B cell (primary cell): ENCODE measurements at regions of chr11 and their contacts with region 1.

Region 1: DNA sequence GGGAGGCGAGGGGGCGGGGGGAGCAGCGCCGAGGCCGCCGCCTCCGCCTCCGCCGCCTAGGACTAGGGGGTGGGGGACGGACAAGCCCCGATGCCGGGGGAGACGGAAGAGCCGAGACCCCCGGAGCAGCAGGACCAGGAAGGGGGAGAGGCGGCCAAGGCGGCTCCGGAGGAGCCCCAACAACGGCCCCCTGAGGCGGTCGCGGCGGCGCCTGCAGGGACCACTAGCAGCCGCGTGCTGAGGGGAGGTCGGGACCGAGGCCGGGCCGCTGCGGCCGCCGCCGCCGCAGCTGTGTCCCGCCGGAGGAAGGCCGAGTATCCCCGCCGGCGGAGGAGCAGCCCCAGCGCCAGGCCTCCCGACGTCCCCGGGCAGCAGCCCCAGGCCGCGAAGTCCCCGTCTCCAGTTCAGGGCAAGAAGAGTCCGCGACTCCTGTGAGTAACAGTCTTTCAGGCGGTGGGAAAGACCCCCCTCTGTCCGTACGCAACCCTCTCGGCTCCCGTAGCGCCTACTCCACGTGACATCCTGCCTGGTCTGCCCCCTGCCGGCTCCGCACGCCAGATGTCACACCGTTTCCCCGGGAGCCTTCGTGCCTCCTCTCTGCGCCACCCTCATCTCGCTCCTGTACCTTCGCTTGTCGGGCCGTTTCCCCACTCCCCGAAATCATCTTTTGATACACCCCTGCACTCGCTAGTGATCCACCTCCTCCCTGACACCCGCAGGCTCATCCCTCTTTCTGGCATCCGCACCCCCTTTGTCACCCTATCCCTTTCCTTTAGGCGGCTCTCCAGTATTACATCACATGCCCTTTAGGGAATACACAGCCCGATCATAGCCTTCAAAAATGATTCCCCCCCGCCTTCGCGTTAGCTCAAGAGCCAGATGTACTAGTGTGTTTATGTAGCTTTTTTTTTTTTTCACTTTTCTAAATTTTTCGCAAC is 598 bp downstream of the ZFP91 start:
- DNase-seq: peak; percentile 96
- ATAC-seq: peak; percentile 37
- H3K4me3 ChIP-seq: peak overlapping the region; percentile 71 to 100 (median 99)
- H3K4me3 Mint-ChIP-seq: peak overlapping the region; percentile 97
- H3K27ac ChIP-seq: peak overlapping the region; percentile 89 to 100
- H3K27ac Mint-ChIP-seq: peak overlapping the region; percentile 100
- H3K4me1 ChIP-seq: peaks cover 48 to 52% of the 10 kb centered on the region in 2 donors
- H3K4me1 Mint-ChIP-seq: peaks cover 64% of the 10 kb centered on the region
- H3K27me3 ChIP-seq: no peaks in the 10 kb centered on the region
- H3K27me3 Mint-ChIP-seq: no peaks in the 10 kb centered on the region
- CTCF ChIP-seq: peak; percentile 79

Region 2: GRCh38 chr11:57657194-57658022 is 922.1 kb before region 1 on chr11 and contains the start of gene CLP1:
- CTCF ChIA-PET with region 1: no interaction called
- POLR2A ChIA-PET with region 1: no interaction called
- intact Hi-C with region 1: loop called (anchors 2 kb)
- DNase-seq: peak; percentile 98
- ATAC-seq: peak; percentile 97
- H3K4me3 ChIP-seq: peak within 1 kb of the TSS; percentile 68 to 95 (median 92)
- H3K4me3 Mint-ChIP-seq: peak within 1 kb of the TSS; percentile 94
- H3K27ac ChIP-seq: peak within 1 kb of the TSS; percentile 77 to 92
- H3K27ac Mint-ChIP-seq: peak within 1 kb of the TSS; percentile 94
- H3K4me1 ChIP-seq: peaks cover 8 to 14% of the 10 kb centered on the region in 2 donors
- H3K4me1 Mint-ChIP-seq: peaks cover 28% of the 10 kb centered on the region
- H3K27me3 ChIP-seq: no peaks in the 10 kb centered on the region
- H3K27me3 Mint-ChIP-seq: no peaks in the 10 kb centered on the region
- CTCF ChIP-seq: no peak
- total RNA-seq, gene CLP1: 15.5 and 15.8 TPM in 2 replicates

Region 3: DNA sequence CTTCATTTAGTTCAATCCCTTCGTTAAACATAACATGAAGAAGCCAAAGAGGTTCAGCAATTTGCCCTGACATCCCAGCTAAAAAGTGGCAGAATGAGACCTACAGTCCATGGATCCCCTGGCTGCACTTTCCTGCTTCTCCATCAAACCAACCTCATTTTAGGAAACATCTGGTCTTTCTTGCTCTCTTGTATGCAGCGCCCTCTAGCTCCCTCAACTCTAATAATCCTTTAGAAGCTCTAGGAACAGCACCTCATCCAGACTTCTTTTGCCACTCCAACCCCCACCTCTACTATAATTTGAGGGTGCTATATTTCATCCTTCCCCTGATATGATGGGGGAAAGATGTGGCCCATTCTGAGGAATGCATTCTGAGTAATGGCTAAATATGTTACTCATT is 50.4 kb after region 1 on chr11:
- CTCF ChIA-PET with region 1: interaction called, 30 read pairs
- POLR2A ChIA-PET with region 1: no interaction called
- intact Hi-C with region 1: no loop called
- DNase-seq: peak; percentile 50
- ATAC-seq: no peak
- H3K4me3 ChIP-seq: no peak overlapping the region
- H3K4me3 Mint-ChIP-seq: no peak overlapping the region
- H3K27ac ChIP-seq: no peak overlapping the region
- H3K27ac Mint-ChIP-seq: peak overlapping the region; percentile 8
- H3K4me1 ChIP-seq: peaks cover 3 to 5% of the 10 kb centered on the region in 2 donors
- H3K4me1 Mint-ChIP-seq: peaks cover 21% of the 10 kb centered on the region
- H3K27me3 ChIP-seq: no peaks in the 10 kb centered on the region
- H3K27me3 Mint-ChIP-seq: no peaks in the 10 kb centered on the region
- CTCF ChIP-seq: peak; percentile 47

Region 4: DNA sequence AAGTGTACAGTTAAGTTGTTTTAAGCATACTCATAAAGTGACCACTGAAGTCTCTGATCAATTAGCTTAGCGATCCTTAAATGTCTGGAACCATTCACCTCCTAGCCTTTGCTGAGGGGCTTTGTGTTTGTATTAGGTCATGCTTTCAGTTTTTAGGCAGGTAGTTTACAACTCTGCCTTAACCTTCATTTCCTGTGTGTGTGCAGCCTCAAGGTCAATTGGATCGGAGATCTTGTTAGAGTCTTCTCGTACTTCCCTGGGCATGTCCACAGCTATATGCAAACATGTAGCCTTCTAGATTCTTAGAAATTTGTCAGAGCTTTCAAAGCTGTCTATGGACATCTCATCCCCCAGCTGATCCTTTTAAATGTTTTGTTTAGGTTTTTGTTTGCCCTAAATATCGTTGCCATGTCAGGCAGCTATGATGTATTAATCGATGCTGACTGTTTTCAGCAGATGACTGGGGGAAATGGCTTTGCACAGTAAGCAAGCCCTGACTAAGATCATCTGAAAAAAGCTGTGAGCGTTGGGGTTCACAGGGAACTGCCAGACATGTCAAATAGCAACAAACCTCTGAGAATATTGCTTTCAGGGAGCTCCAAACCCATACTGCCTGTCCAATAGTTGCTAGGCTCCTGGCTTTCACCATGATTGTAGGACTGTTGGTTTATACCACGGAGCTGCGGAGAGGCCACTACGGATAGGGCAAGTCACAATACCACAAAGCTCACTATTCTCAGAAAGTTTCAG is 106.7 kb after region 1 on chr11:
- CTCF ChIA-PET with region 1: no interaction called
- POLR2A ChIA-PET with region 1: no interaction called
- intact Hi-C with region 1: no loop called
- DNase-seq: no peak
- ATAC-seq: no peak
- H3K4me3 ChIP-seq: no peak overlapping the region
- H3K4me3 Mint-ChIP-seq: no peak overlapping the region
- H3K27ac ChIP-seq: no peak overlapping the region
- H3K27ac Mint-ChIP-seq: no peak overlapping the region
- H3K4me1 ChIP-seq: no peaks in the 10 kb centered on the region
- H3K4me1 Mint-ChIP-seq: no peaks in the 10 kb centered on the region
- H3K27me3 ChIP-seq: peaks cover 0 to 6% (median 0%) of the 10 kb centered on the region in 4 experiments
- H3K27me3 Mint-ChIP-seq: peaks cover 10% of the 10 kb centered on the region
- CTCF ChIP-seq: no peak

Region 5: GRCh38 chr11:59142530-59143507 is 563.4 kb after region 1 on chr11 and contains the start of gene FAM111A:
- CTCF ChIA-PET with region 1: interaction called, 3 read pairs
- POLR2A ChIA-PET with region 1: interaction called, 7 read pairs
- intact Hi-C with region 1: loop called (anchors 2 kb)
- DNase-seq: peak; percentile 91
- ATAC-seq: peak; percentile 74
- H3K4me3 ChIP-seq: peak within 1 kb of the TSS; percentile 82 to 94 (median 89)
- H3K4me3 Mint-ChIP-seq: peak within 1 kb of the TSS; percentile 97
- H3K27ac ChIP-seq: peak within 1 kb of the TSS; percentile 88 to 90
- H3K27ac Mint-ChIP-seq: peak within 1 kb of the TSS; percentile 87
- H3K4me1 ChIP-seq: peaks cover 40 to 45% of the 10 kb centered on the region in 2 donors
- H3K4me1 Mint-ChIP-seq: peaks cover 68% of the 10 kb centered on the region
- H3K27me3 ChIP-seq: no peaks in the 10 kb centered on the region
- H3K27me3 Mint-ChIP-seq: no peaks in the 10 kb centered on the region
- CTCF ChIP-seq: no peak
- total RNA-seq, gene FAM111A: 120 and 126 TPM in 2 replicates

Region 6: DNA sequence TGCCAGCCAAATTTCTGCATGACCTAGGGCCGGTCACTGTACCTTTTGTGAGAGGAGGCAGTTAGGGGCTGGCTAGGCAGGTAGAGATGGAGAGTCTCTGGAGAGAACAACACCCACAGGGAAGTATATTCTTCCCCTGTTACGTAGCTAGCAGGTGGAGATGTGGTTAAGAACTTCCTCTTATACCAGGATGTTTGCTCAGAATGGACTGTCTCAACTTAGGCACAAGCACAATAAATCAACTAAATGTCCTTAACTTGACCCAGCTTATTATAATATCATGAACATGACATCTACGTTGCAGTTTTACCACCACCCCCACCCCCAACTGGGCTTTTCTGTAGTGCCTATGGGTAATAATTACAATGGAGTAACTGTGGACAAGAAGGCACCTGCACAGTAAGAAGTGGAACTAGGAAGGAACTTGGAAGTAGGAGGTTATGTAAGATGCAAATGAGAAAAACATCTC is 693.9 kb after region 1 on chr11:
- CTCF ChIA-PET with region 1: no interaction called
- POLR2A ChIA-PET with region 1: no interaction called
- intact Hi-C with region 1: loop called (anchors 1 kb)
- DNase-seq: peak; percentile 88
- ATAC-seq: peak; percentile 85
- H3K4me3 ChIP-seq: peak overlapping the region in 1 of 5 experiments; percentile 44
- H3K4me3 Mint-ChIP-seq: peak overlapping the region; percentile 83
- H3K27ac ChIP-seq: peak overlapping the region; percentile 90 to 94
- H3K27ac Mint-ChIP-seq: peak overlapping the region; percentile 95
- H3K4me1 ChIP-seq: peaks cover 76 to 85% of the 10 kb centered on the region in 2 donors
- H3K4me1 Mint-ChIP-seq: peaks cover 92% of the 10 kb centered on the region
- H3K27me3 ChIP-seq: no peaks in the 10 kb centered on the region
- H3K27me3 Mint-ChIP-seq: no peaks in the 10 kb centered on the region
- CTCF ChIP-seq: no peak

Region 7: DNA sequence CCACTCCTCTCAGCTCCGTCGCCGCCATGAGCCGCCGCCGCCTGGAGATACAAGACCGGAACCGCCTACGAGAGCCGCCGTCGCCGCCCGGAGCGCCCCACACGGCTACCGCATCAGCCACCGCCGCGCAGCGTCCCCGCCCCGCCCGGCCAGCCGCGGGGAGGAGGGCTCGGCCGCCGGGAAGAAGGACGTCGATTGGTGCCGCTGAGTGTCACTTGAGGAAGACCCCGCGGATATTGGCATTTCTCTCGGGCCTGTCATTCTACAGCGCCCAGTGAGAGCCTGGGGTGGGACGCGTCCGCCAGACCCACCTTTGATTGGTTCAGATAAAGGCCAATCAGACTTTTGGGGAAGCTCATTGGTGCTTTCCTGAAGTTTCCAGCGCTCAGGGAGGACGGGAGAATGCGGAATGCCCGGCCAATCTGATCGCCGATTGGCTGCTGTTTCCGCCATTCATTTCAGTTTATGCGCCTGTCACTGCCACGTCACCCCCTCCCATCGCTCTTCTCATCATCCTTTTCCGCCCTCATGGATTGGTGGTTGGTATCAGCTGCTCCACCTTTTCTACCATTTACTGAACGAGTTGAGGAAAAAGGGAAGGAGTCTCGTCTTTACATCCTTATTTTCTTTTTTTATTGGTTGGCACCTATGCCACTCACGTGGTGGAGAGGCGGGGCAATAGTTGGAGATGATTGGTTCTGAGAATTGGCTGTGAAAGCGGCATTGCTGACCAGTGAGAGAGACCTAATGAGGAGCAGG is 1036.4 kb after region 1 on chr11 and contains the start of gene OSBP:
- CTCF ChIA-PET with region 1: no interaction called
- POLR2A ChIA-PET with region 1: no interaction called
- intact Hi-C with region 1: loop called (anchors 1 kb)
- DNase-seq: peak; percentile 100
- ATAC-seq: peak; percentile 76
- H3K4me3 ChIP-seq: peak within 1 kb of the TSS; percentile 47 to 86 (median 77)
- H3K4me3 Mint-ChIP-seq: peak within 1 kb of the TSS; percentile 89
- H3K27ac ChIP-seq: peak within 1 kb of the TSS; percentile 92 to 97
- H3K27ac Mint-ChIP-seq: peak within 1 kb of the TSS; percentile 92
- H3K4me1 ChIP-seq: peaks cover 20% of the 10 kb centered on the region in 2 donors
- H3K4me1 Mint-ChIP-seq: peaks cover 43% of the 10 kb centered on the region
- H3K27me3 ChIP-seq: no peaks in the 10 kb centered on the region
- H3K27me3 Mint-ChIP-seq: no peaks in the 10 kb centered on the region
- CTCF ChIP-seq: no peak
- total RNA-seq, gene OSBP: 40.2 and 42.5 TPM in 2 replicates